Mammary epithelial cell (primary cell): ENCODE measurements at regions of chr1 and their contacts with region 1.

Region 1: GRCh38 chr1:160006312-160006940 is 25.4 kb downstream of the PIGM start:
- DNase-seq: peak; percentile 59
- H3K4me3 ChIP-seq: no peak overlapping the region
- H3K27ac ChIP-seq: no peak overlapping the region
- H3K4me1 ChIP-seq: peaks cover 14% of the 10 kb centered on the region
- H3K27me3 ChIP-seq: no peaks in the 10 kb centered on the region
- CTCF ChIP-seq: peak; percentile 96 to 97

Region 2: DNA sequence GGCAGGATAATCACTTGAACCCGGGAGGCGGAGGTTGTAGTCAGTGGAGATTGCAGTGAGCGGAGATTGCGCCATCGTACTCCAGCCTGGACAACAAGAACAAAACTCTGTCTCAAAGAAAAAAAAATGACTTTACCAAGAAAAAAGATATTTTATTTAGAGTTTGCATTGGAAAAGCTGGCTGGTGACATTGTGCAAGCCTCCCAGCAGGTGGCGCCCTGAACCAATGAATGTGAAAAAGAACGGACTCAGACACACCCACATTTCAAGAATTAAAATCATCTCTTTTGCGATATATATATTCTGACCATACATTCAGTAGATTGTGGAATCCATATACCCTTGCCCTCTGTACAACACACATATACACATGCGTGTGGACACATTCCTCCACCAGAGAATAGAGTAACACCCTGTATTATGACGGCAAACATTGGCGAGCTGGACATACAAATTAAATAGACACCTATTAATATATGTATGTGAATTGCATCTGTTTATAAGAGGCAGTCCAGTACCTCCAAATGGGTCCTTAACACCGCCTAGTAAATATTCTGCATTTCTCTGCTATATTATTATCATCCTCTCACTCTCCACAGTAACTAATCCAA is 874.0 kb before region 1 on chr1:
- CTCF ChIA-PET with region 1: interaction called, 32 read pairs
- dilution Hi-C with region 1: no loop called
- in situ Hi-C with region 1: no loop called
- intact Hi-C with region 1: no loop called
- DNase-seq: peak; percentile 30
- H3K4me3 ChIP-seq: no peak overlapping the region
- H3K27ac ChIP-seq: no peak overlapping the region
- H3K4me1 ChIP-seq: no peaks in the 10 kb centered on the region
- H3K27me3 ChIP-seq: no peaks in the 10 kb centered on the region
- CTCF ChIP-seq: peak; percentile 84 to 90

Region 3: DNA sequence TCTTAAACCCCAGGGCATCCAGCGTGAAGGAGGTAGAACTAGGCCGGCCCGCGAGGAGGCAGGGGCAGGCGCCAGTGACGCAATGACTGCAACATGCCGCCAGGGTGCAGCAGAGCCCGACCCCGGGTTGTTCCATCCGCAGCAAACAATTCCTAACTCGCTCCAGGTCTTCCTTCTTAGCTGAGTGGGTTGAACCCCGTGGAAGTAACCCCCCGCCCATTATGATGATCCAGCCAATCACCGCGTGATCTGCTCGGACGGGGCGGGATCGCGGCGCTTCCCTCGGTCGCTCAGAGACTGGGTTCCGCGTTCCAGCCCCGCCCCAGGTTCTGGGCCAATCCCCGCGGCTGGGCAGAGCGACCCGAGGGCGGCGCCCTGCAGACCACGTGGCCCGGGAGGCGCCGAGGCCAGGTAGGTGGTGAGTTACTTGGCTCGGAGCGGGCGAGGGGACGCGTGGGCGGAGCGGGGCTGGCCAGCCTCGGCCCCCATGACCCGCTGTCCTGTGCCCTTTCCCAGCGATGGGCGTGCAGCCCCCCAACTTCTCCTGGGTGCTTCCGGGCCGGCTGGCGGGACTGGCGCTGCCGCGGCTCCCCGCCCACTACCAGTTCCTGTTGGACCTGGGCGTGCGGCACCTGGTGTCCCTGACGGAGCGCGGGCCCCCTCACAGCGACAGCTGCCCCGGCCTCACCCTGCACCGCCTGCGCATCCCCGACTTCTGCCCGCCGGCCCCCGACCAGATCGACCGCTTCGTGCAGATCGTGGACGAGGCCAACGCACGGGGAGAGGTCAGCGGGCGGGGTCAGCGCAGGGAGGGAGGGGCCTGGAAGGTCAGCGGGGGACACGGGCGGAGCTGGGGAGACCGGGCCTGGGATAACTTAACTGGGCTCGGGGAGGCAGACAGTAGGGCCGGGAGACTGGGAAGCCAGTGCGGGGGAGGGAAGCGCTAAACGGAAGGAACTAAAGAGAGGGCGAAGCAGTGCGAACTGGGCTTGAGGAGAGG is 225.5 kb before region 1 on chr1 and contains the start of gene DUSP23:
- CTCF ChIA-PET with region 1: no interaction called
- dilution Hi-C with region 1: loop called (anchors 5 kb)
- in situ Hi-C with region 1: no loop called
- intact Hi-C with region 1: loop called (anchors 1 kb)
- DNase-seq: peak; percentile 99
- H3K4me3 ChIP-seq: peak within 1 kb of the TSS; percentile 65 to 91 (median 77)
- H3K27ac ChIP-seq: no peak within 1 kb of the TSS
- H3K4me1 ChIP-seq: peaks cover 25% of the 10 kb centered on the region
- H3K27me3 ChIP-seq: no peaks in the 10 kb centered on the region
- CTCF ChIP-seq: peak; percentile 82 to 96
- total RNA-seq, gene DUSP23: 32.1 to 39.5 TPM

Region 4: GRCh38 chr1:159936273-159936904 is 70.0 kb before region 1 on chr1:
- CTCF ChIA-PET with region 1: interaction called, 4 read pairs
- dilution Hi-C with region 1: no loop called
- in situ Hi-C with region 1: loop called (anchors 5 kb)
- intact Hi-C with region 1: loop called (anchors 1 kb)
- DNase-seq: peak; percentile 51
- H3K4me3 ChIP-seq: no peak overlapping the region
- H3K27ac ChIP-seq: no peak overlapping the region
- H3K4me1 ChIP-seq: peaks cover 33% of the 10 kb centered on the region
- H3K27me3 ChIP-seq: no peaks in the 10 kb centered on the region
- CTCF ChIP-seq: peak; percentile 97 to 98

Region 5: GRCh38 chr1:159960721-159961381 is 45.6 kb before region 1 on chr1:
- CTCF ChIA-PET with region 1: interaction called, 8 read pairs
- dilution Hi-C with region 1: no loop called
- in situ Hi-C with region 1: no loop called
- intact Hi-C with region 1: loop called (anchors 1 kb)
- DNase-seq: peak; percentile 81
- H3K4me3 ChIP-seq: peak overlapping the region in 1 of 3 experiments; percentile 17
- H3K27ac ChIP-seq: peak overlapping the region; percentile 71
- H3K4me1 ChIP-seq: peaks cover 22% of the 10 kb centered on the region
- H3K27me3 ChIP-seq: no peaks in the 10 kb centered on the region
- CTCF ChIP-seq: no peak